Right ventricle myocardium inferior (tissue), 1 donor: ENCODE measurements at regions of chr17 and their contacts with region 1.

Region 1: GRCh38 chr17:29124117-29124924 is 55.9 kb downstream of the MYO18A start:
- DNase-seq: no peak
- ATAC-seq: peak; percentile 67

Region 2: GRCh38 chr17:29138971-29139691 is 14.8 kb after region 1 on chr17:
- intact Hi-C with region 1: loop called (anchors 2 kb)
- DNase-seq: peak; percentile 85
- ATAC-seq: peak; percentile 58